ENCODE measurements at regions of chrX and their contacts with region 1.

Region 1: GRCh38 chrX:102659790-102660757 is 8.8 kb downstream of the GPRASP1 start:
- DNase-seq: peak; percentile 68
- H3K4me3 Mint-ChIP-seq: peak overlapping the region; percentile 92
- H3K27ac Mint-ChIP-seq: peak overlapping the region; percentile 76
- H3K4me1 Mint-ChIP-seq: peaks cover 8% of the 10 kb centered on the region
- H3K27me3 Mint-ChIP-seq: peaks cover 6% of the 10 kb centered on the region

Region 2: GRCh38 chrX:102637561-102637960 is 22.5 kb before region 1 on chrX:
- intact Hi-C with region 1: no loop called
- DNase-seq: no peak
- H3K4me3 Mint-ChIP-seq: no peak overlapping the region
- H3K27ac Mint-ChIP-seq: no peak overlapping the region
- H3K4me1 Mint-ChIP-seq: no peaks in the 10 kb centered on the region
- H3K27me3 Mint-ChIP-seq: no peaks in the 10 kb centered on the region

Region 3: DNA sequence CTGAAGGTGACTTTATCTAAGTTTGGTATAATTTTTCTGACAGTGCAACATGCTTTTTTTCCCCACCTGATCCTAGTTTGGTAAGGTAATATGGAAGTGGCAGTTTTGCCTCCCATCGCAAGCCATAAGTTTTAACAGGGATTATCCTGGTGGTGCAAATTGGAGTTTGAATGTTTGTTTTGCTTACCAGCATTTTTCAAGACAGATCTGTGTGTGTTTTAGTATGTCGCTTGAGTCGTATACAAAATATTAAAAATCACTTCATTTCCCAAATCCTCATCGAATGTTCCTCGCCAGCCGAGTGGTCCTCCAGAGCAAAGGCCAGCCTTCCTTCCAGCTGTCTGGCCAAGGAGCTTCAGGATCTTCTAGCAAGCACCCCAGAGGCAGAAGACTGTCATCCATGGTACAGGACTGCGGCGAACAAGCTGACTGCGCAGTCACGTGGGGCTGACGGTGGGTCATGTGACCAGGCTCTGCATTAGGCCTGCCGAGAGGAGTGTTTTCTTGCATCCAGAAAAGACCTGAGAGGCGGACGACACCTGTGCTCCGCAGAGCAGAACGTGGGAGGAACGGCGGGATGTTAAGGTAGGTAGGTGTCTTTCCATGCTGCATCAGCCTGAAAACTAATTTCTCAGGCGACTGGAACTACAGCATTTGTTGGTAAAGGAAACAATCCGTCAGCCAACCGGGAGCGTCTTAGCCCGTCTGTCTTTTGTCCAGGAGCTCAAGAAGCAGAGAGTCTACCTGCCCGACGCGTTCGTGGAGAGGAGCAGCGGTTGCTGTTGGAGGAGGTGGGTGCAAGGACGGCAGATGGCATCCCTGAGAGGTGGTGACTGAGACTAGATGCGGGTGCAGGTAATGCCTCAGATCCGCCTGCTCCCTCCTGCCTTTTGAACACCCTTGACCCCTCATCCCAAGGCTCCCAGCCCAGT is 60.4 kb after region 1 on chrX and contains the start of gene GPRASP3:
- intact Hi-C with region 1: loop called (anchors 2 kb)
- DNase-seq: peak; percentile 56
- H3K4me3 Mint-ChIP-seq: peak within 1 kb of the TSS; percentile 88
- H3K27ac Mint-ChIP-seq: peak within 1 kb of the TSS; percentile 88
- H3K4me1 Mint-ChIP-seq: peaks cover 11% of the 10 kb centered on the region
- H3K27me3 Mint-ChIP-seq: no peaks in the 10 kb centered on the region
- total RNA-seq, gene GPRASP3: 0.65 and 0.88 TPM in 2 replicates